ENCODE measurements at regions of chr7 and their contacts with region 1.

Region 1: GRCh38 chr7:75914730-75915585 is at the start of gene POR:
- DNase-seq: peak; percentile 80 to 96
- H3K4me3 ChIP-seq: peak within 1 kb of the TSS; percentile 81 to 84
- H3K27ac ChIP-seq: peak within 1 kb of the TSS; percentile 81 to 84
- H3K4me1 ChIP-seq: peaks cover 3 to 5% of the 10 kb centered on the region in 2 donors
- H3K27me3 ChIP-seq: no peaks in the 10 kb centered on the region
- CTCF ChIP-seq: peak in 2 of 3 experiments; percentile 3 to 11
- total RNA-seq, gene POR: 236 TPM

Region 2: DNA sequence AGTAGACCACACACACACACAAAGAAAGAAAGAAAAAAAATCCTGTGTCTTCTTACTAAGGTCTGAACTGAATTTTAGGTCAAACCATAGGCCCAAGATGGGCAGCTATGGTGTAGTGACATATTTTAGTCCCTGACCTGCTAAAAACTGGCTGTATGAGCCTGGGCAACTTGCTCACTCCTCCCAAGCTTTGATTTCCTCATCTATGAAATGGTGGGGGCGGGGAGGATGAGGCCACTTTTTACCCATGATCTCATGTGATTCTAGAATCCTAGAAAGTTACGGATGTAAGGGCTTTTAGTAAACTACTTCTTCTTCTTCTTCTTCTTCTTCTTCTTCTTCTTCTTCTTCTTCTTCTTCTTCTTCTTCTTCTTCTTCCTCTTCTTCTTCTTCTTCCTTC is 95.2 kb before region 1 on chr7:
- intact Hi-C with region 1: no loop called
- DNase-seq: peak in 1 of 2 donors; percentile 66
- H3K4me3 ChIP-seq: no peak overlapping the region
- H3K27ac ChIP-seq: no peak overlapping the region
- H3K4me1 ChIP-seq: no peaks in the 10 kb centered on the region
- H3K27me3 ChIP-seq: no peaks in the 10 kb centered on the region
- CTCF ChIP-seq: no peak

Region 3: GRCh38 chr7:75985518-75986146 is 70.7 kb after region 1 on chr7:
- intact Hi-C with region 1: no loop called
- DNase-seq: no peak
- H3K4me3 ChIP-seq: no peak overlapping the region
- H3K27ac ChIP-seq: no peak overlapping the region
- H3K4me1 ChIP-seq: peaks cover 6 to 11% of the 10 kb centered on the region in 2 donors
- H3K27me3 ChIP-seq: no peaks in the 10 kb centered on the region
- CTCF ChIP-seq: no peak

Region 4: GRCh38 chr7:76011442-76011861 is 96.5 kb after region 1 on chr7:
- intact Hi-C with region 1: loop called (anchors 5 kb)
- DNase-seq: peak in 1 of 2 donors; percentile 72
- H3K4me3 ChIP-seq: peak overlapping the region; percentile 8 to 18
- H3K27ac ChIP-seq: peak overlapping the region; percentile 75 to 80
- H3K4me1 ChIP-seq: peaks cover 4 to 14% of the 10 kb centered on the region in 2 donors
- H3K27me3 ChIP-seq: no peaks in the 10 kb centered on the region
- CTCF ChIP-seq: no peak